ENCODE measurements at regions of chr3 and their contacts with region 1.

Region 1: GRCh38 chr3:133821767-133822638 is 16.4 kb downstream of the SRPRB start:
- DNase-seq: peak in 3 of 10 donors; percentile 29 to 63 (median 39)

Region 2: DNA sequence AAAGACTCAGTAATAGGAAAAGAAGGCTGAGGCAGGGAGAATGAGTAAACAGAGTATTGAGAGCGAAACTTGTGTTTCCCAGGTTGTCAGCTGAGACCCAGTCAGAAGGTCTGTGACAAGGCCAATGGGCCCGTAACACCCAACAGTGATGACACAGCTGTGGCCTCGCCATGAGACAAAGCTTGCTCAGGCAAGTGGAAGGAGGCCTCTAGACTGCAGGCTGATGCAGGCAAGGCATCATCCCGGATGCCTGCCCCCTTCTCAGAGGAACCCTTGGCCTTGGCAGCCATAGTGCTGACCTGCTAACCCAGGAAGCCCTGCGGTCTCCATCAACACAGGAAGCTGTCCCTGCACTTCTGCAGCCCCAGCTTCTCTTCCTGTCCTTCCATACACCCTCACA is 58.3 kb after region 1 on chr3:
- intact Hi-C with region 1: loop called (anchors 10 kb)
- DNase-seq: no peak

Region 3: DNA sequence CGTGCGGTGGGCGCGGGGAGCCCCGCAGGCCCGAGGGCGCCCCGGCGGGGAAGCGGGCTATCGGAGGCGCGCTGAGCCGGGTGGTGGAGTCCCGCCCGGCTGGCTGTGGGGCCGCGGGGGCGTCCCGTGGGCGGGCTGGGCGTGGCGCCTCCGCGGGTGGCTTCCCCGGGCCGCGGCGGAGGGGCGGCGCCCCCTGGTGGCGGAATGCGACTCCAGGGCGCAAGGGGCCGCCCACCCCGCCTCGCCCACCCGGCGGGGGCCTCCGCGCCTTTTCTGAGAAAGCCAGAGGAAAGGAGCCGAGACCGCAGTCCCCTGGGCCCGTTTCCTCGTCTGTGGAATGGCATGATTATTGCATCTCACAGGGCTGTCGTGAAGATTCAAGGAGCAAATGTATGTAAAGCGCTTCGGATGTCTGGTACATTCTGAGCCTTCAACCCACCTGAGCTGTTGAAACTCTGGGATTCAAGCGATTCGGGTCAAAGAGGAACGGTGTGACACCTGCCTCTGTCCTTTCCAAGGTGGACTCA is 105.6 kb after region 1 on chr3:
- intact Hi-C with region 1: loop called (anchors 1 kb)
- DNase-seq: peak in 7 of 10 donors; percentile 34 to 93 (median 47)

Measured in posterior cingulate gyrus (tissue), 11 donors.